Activated naive CD4-positive, alpha-beta T cell treated with anti-CD3 and anti-CD28 coated beads for 36 hours (primary cell): ENCODE measurements at regions of chr12 and their contacts with region 1.

Region 1: GRCh38 chr12:67068761-67069450 is 200.3 kb upstream of the CAND1 start:
- DNase-seq: peak; percentile 51
- H3K4me3 Mint-ChIP-seq: peak overlapping the region; percentile 91
- H3K27ac Mint-ChIP-seq: peak overlapping the region; percentile 72
- H3K4me1 Mint-ChIP-seq: peaks cover 25% of the 10 kb centered on the region
- H3K27me3 Mint-ChIP-seq: peaks cover 20% of the 10 kb centered on the region

Region 2: DNA sequence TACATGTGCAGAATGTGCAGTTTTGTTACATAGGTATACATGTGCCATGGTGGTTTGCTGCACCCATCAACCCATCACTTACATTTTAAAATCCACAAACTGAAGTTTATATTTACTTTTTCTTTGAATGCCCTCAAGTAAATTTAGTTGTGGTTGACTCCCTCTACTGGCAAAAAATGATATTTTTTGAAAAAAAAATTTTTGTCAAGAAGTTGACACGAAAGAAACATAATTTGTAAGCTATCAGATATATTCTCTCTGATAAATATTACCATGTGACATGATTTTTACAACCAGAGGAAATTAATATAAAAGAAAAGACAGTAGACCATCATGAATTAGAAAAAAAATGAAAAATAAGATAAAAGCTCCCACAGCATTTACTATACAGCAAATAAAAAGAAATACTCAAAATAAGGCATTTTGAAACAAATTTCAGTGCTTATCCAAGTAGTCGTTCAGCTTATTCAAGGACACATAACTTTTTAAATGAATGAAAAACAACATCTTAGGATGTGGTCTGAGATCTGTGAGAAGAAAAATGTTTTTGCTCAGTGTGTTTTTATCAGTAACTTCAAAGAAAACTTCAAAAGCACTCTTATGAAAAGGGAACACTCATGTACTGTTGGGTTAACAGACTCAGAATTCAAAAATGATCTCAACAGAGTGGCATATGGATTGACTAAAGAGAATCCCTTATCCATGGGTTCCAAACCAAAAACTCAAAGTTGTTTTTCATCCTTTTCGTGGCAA is 360.0 kb before region 1 on chr12:
- CTCF ChIA-PET with region 1: no interaction called
- intact Hi-C with region 1: loop called (anchors 2 kb)
- DNase-seq: no peak
- H3K4me3 Mint-ChIP-seq: peak overlapping the region; percentile 32
- H3K27ac Mint-ChIP-seq: peak overlapping the region; percentile 7
- H3K4me1 Mint-ChIP-seq: peaks cover 33% of the 10 kb centered on the region
- H3K27me3 Mint-ChIP-seq: no peaks in the 10 kb centered on the region

Region 3: GRCh38 chr12:67014642-67015041 is 54.3 kb before region 1 on chr12:
- CTCF ChIA-PET with region 1: no interaction called
- intact Hi-C with region 1: no loop called
- DNase-seq: no peak
- H3K4me3 Mint-ChIP-seq: no peak overlapping the region
- H3K27ac Mint-ChIP-seq: no peak overlapping the region
- H3K4me1 Mint-ChIP-seq: no peaks in the 10 kb centered on the region
- H3K27me3 Mint-ChIP-seq: no peaks in the 10 kb centered on the region

Region 4: DNA sequence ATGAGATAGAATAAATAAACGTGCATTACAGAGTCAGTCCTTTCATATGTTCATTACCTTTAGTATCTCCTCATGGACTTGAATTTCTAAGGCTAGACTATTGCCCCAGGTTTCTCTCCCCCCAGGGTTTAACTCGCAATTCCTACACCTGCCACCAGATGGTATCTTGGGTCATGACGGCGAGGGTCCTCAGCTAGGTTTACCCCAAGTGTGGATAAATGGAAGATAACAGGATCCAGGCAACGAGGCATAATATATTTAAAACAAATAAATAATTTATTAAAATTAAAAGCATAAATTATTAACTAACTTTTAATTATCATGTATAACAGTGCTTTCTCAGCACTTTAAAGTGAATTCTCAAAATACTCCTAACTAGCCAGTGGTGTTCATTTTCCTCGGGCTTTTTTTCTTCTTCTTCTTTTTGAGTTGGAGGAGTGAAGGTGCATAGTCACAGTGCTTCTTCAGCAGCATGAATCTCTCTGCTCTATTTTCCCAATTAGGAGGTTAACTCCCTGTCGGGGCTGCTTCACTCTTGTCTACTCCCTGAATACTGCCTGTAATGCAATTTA is 43.3 kb before region 1 on chr12:
- CTCF ChIA-PET with region 1: no interaction called
- intact Hi-C with region 1: loop called (anchors 1 kb)
- DNase-seq: peak; percentile 67
- H3K4me3 Mint-ChIP-seq: no peak overlapping the region
- H3K27ac Mint-ChIP-seq: no peak overlapping the region
- H3K4me1 Mint-ChIP-seq: peaks cover 3% of the 10 kb centered on the region
- H3K27me3 Mint-ChIP-seq: no peaks in the 10 kb centered on the region

Region 5: DNA sequence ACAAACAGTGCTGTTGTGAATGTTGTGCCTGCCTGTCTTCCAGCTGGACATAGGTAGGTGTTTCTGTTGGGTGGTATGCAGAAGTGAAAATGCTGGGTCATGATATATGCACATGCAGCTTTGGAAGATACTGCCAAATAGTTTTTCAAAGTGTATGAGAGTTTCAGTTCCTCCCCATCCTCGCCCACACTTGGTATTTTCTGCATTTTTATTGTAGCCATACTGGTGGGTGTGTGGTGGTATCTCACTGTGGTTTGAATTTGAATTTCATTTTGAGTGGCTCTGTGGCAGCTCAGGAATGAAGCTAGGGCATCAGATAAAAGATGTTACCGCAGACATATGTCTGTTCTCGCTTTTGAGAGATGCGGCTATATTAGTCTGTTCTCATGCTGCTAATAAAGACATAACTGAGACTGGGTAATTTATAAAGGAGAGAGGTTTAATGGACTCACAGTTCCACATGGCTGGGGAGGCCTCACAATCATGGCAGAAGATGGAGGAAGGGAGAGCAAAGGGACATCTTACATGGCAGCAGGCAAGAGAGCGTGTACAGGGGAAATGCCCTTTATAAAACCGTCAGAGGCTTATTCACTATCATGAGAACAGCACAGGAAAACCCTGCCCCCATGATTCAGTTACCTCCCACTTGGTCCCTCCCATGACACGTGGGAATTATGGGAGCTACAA is 383.4 kb after region 1 on chr12:
- CTCF ChIA-PET with region 1: no interaction called
- intact Hi-C with region 1: loop called (anchors 2 kb)
- DNase-seq: no peak
- H3K4me3 Mint-ChIP-seq: no peak overlapping the region
- H3K27ac Mint-ChIP-seq: no peak overlapping the region
- H3K4me1 Mint-ChIP-seq: peaks cover 47% of the 10 kb centered on the region
- H3K27me3 Mint-ChIP-seq: peaks cover 2% of the 10 kb centered on the region